Naive thymus-derived CD4-positive, alpha-beta T cell (primary cell): ENCODE measurements at regions of chr2 and their contacts with region 1.

Region 1: GRCh38 chr2:222860740-222861410 is at the start of gene ACSL3:
- DNase-seq: peak; percentile 85 to 96 (median 91)
- ATAC-seq: peak; percentile 99
- H3K4me3 ChIP-seq: peak within 1 kb of the TSS; percentile 82
- H3K4me3 Mint-ChIP-seq: peak within 1 kb of the TSS in 9 of 10 donors; percentile 62 to 88 (median 79)
- H3K27ac ChIP-seq: peak within 1 kb of the TSS; percentile 90
- H3K27ac Mint-ChIP-seq: peak within 1 kb of the TSS in 8 of 9 donors; percentile 87 to 96 (median 92)
- H3K4me1 ChIP-seq: peaks cover 13 to 20% of the 10 kb centered on the region in 2 donors
- H3K4me1 Mint-ChIP-seq: peaks cover 0 to 15% (median 9%) of the 10 kb centered on the region in 7 donors
- H3K27me3 ChIP-seq: no peaks in the 10 kb centered on the region
- H3K27me3 Mint-ChIP-seq: peaks cover 0 to 15% (median 0%) of the 10 kb centered on the region in 5 donors
- total RNA-seq, gene ACSL3: 30.3 to 69.6 (median 40.5) TPM

Region 2: GRCh38 chr2:222610746-222611145 is 250.1 kb before region 1 on chr2:
- CTCF ChIA-PET with region 1: no interaction called
- POLR2A ChIA-PET with region 1: no interaction called
- intact Hi-C with region 1: no loop called
- DNase-seq: no peak
- ATAC-seq: no peak
- H3K4me3 ChIP-seq: no peak overlapping the region
- H3K4me3 Mint-ChIP-seq: no peak overlapping the region
- H3K27ac ChIP-seq: no peak overlapping the region
- H3K27ac Mint-ChIP-seq: no peak overlapping the region
- H3K4me1 ChIP-seq: no peaks in the 10 kb centered on the region
- H3K4me1 Mint-ChIP-seq: peaks cover 0 to 9% (median 0%) of the 10 kb centered on the region in 7 donors
- H3K27me3 ChIP-seq: no peaks in the 10 kb centered on the region
- H3K27me3 Mint-ChIP-seq: no peaks in the 10 kb centered on the region

Region 3: DNA sequence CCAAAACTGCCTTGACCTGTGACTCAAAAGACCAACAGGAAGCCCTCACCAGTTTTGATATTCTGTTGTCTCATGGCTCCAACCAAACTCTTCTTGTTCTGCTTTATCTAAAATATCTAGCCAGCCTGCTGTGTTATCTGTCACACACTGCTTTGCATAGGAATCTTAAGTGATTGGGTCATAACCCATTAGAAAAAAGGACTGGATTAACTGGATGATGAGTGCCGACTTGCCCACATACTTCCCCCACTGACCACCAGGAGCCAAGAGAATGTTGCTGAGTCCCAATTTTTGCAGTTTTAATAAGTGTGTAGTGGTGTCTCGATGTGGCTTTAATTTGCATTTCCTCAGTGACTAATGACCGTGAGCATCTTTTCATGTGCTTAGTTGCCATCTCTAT is 182.9 kb before region 1 on chr2:
- CTCF ChIA-PET with region 1: no interaction called
- POLR2A ChIA-PET with region 1: no interaction called
- intact Hi-C with region 1: no loop called
- DNase-seq: no peak
- ATAC-seq: no peak
- H3K4me3 ChIP-seq: no peak overlapping the region
- H3K4me3 Mint-ChIP-seq: no peak overlapping the region
- H3K27ac ChIP-seq: no peak overlapping the region
- H3K27ac Mint-ChIP-seq: no peak overlapping the region
- H3K4me1 ChIP-seq: no peaks in the 10 kb centered on the region
- H3K4me1 Mint-ChIP-seq: no peaks in the 10 kb centered on the region
- H3K27me3 ChIP-seq: peaks cover 0 to 8% of the 10 kb centered on the region in 2 donors
- H3K27me3 Mint-ChIP-seq: peaks cover 43 to 77% (median 60%) of the 10 kb centered on the region in 5 donors

Region 4: GRCh38 chr2:222707689-222708525 is 153.0 kb before region 1 on chr2:
- CTCF ChIA-PET with region 1: no interaction called
- POLR2A ChIA-PET with region 1: no interaction called
- intact Hi-C with region 1: loop called in 1 of 2 experiments (anchors 1 kb)
- DNase-seq: peak; percentile 33 to 77 (median 65)
- ATAC-seq: peak; percentile 83
- H3K4me3 ChIP-seq: no peak overlapping the region
- H3K4me3 Mint-ChIP-seq: no peak overlapping the region
- H3K27ac ChIP-seq: no peak overlapping the region
- H3K27ac Mint-ChIP-seq: peak overlapping the region in 1 of 9 donors; percentile 17
- H3K4me1 ChIP-seq: no peaks in the 10 kb centered on the region
- H3K4me1 Mint-ChIP-seq: peaks cover 0 to 15% (median 0%) of the 10 kb centered on the region in 7 donors
- H3K27me3 ChIP-seq: no peaks in the 10 kb centered on the region
- H3K27me3 Mint-ChIP-seq: peaks cover 33 to 51% (median 39%) of the 10 kb centered on the region in 5 donors

Region 5: DNA sequence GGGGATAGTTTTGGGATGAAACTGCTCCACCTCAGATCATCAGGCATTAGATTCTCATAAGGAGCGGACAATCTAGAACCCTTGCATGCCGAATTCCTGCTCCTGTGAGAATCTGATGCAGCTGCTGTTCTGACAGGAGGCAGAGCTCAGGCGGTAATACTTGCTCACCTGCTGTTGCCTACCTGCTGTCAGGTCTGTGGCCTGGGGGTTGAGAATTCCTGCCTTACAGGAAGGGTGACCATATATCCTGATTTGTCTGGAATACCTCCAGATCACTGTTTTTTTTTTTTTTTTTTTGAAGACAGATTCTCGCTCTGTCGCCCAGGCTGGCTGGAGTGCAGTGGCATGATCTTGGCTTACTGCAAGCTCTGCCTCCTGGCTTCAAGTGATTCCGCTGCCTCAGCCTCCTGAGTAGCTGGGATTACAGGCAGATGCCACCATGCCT is 21.6 kb after region 1 on chr2:
- CTCF ChIA-PET with region 1: no interaction called
- POLR2A ChIA-PET with region 1: no interaction called
- intact Hi-C with region 1: loop called in 1 of 2 experiments (anchors 2 kb)
- DNase-seq: no peak
- ATAC-seq: no peak
- H3K4me3 ChIP-seq: no peak overlapping the region
- H3K4me3 Mint-ChIP-seq: no peak overlapping the region
- H3K27ac ChIP-seq: no peak overlapping the region
- H3K27ac Mint-ChIP-seq: no peak overlapping the region
- H3K4me1 ChIP-seq: no peaks in the 10 kb centered on the region
- H3K4me1 Mint-ChIP-seq: peaks cover 6 to 83% (median 65%) of the 10 kb centered on the region in 7 donors
- H3K27me3 ChIP-seq: no peaks in the 10 kb centered on the region
- H3K27me3 Mint-ChIP-seq: no peaks in the 10 kb centered on the region

Region 6: DNA sequence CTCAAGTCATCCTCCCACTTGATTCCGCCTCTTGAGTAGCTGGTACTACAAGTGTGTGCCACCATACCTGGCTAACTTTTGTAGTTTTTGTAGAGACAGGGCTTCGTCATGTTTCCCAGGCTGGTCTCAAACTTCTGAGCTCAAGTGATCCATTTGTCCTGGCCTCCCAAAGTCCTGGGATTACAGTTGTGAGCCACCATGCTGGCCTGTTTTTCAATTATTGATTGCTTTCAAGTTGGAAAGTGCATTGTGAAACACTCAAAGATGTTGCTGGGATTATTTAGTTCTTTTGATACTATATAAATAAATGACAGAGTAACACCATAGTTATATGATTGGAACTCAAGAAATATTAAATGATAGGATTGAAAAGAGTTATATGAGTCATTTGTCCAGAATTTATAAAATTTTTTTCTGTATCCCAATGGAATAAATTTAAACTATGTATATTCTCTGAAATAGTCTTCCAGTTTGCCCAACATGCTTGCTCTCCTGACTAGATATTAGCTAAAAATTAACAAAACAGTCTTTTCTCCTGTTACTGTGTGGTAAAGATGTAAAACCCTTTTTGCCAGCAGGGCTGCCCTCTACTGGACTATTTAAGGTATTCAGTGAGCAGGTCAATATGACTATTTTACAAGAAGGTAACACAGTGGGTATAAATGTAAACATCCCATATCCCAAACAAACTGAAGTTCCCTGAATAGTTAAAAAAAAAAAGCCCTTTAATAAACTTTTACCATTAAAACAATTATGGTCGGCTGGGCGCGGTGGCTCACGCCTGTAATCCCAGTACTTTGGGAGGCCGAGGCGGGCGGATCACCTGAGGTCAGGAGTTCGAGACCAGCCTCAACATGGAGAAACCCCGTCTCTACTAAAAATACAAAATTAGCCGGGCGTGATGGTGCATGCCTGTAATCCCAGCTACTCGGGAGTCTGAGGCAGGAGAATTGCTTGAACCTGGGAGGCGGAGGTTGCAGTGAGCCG is 42.7 kb after region 1 on chr2:
- CTCF ChIA-PET with region 1: interaction called, 3 read pairs
- POLR2A ChIA-PET with region 1: interaction called, 3 read pairs
- intact Hi-C with region 1: loop called in 1 of 2 experiments (anchors 2 kb)
- DNase-seq: peak in 7 of 9 donors; percentile 23 to 55 (median 37)
- ATAC-seq: peak; percentile 85
- H3K4me3 ChIP-seq: no peak overlapping the region
- H3K4me3 Mint-ChIP-seq: no peak overlapping the region
- H3K27ac ChIP-seq: no peak overlapping the region
- H3K27ac Mint-ChIP-seq: peak overlapping the region in 1 of 9 donors; percentile 21
- H3K4me1 ChIP-seq: no peaks in the 10 kb centered on the region
- H3K4me1 Mint-ChIP-seq: peaks cover 18 to 52% (median 37%) of the 10 kb centered on the region in 7 donors
- H3K27me3 ChIP-seq: no peaks in the 10 kb centered on the region
- H3K27me3 Mint-ChIP-seq: no peaks in the 10 kb centered on the region

Region 7: GRCh38 chr2:223837287-223838061 is 976.6 kb after region 1 on chr2 and contains the start of gene AP1S3:
- CTCF ChIA-PET with region 1: no interaction called
- POLR2A ChIA-PET with region 1: interaction called, 3 read pairs
- intact Hi-C with region 1: loop called in 1 of 2 experiments (anchors 10 kb)
- DNase-seq: peak; percentile 30 to 75 (median 58)
- ATAC-seq: peak; percentile 88
- H3K4me3 ChIP-seq: peak within 1 kb of the TSS; percentile 69
- H3K4me3 Mint-ChIP-seq: peak within 1 kb of the TSS; percentile 87 to 97 (median 94)
- H3K27ac ChIP-seq: peak within 1 kb of the TSS; percentile 60
- H3K27ac Mint-ChIP-seq: peak within 1 kb of the TSS; percentile 36 to 84 (median 76)
- H3K4me1 ChIP-seq: no peaks in the 10 kb centered on the region
- H3K4me1 Mint-ChIP-seq: peaks cover 0 to 20% (median 12%) of the 10 kb centered on the region in 7 donors
- H3K27me3 ChIP-seq: no peaks in the 10 kb centered on the region
- H3K27me3 Mint-ChIP-seq: no peaks in the 10 kb centered on the region
- total RNA-seq, gene AP1S3: 0.54 to 8.2 (median 1.6) TPM